ENCODE measurements at regions of chr17 and their contacts with region 1.

Region 1: GRCh38 chr17:13346996-13347765 is 254.5 kb downstream of the HS3ST3A1 start:
- DNase-seq: no peak
- ATAC-seq: no peak
- H3K4me3 ChIP-seq: no peak overlapping the region
- H3K27ac ChIP-seq: no peak overlapping the region
- H3K4me1 ChIP-seq: no peaks in the 10 kb centered on the region
- H3K27me3 ChIP-seq: no peaks in the 10 kb centered on the region
- CTCF ChIP-seq: no peak

Region 2: GRCh38 chr17:13538841-13539411 is 191.7 kb after region 1 on chr17:
- CTCF ChIA-PET with region 1: no interaction called
- POLR2A ChIA-PET with region 1: no interaction called
- in situ Hi-C with region 1: no loop called
- intact Hi-C with region 1: loop called (anchors 10 kb)
- DNase-seq: no peak
- ATAC-seq: no peak
- H3K4me3 ChIP-seq: no peak overlapping the region
- H3K27ac ChIP-seq: no peak overlapping the region
- H3K4me1 ChIP-seq: no peaks in the 10 kb centered on the region
- H3K27me3 ChIP-seq: no peaks in the 10 kb centered on the region
- CTCF ChIP-seq: no peak

Region 3: DNA sequence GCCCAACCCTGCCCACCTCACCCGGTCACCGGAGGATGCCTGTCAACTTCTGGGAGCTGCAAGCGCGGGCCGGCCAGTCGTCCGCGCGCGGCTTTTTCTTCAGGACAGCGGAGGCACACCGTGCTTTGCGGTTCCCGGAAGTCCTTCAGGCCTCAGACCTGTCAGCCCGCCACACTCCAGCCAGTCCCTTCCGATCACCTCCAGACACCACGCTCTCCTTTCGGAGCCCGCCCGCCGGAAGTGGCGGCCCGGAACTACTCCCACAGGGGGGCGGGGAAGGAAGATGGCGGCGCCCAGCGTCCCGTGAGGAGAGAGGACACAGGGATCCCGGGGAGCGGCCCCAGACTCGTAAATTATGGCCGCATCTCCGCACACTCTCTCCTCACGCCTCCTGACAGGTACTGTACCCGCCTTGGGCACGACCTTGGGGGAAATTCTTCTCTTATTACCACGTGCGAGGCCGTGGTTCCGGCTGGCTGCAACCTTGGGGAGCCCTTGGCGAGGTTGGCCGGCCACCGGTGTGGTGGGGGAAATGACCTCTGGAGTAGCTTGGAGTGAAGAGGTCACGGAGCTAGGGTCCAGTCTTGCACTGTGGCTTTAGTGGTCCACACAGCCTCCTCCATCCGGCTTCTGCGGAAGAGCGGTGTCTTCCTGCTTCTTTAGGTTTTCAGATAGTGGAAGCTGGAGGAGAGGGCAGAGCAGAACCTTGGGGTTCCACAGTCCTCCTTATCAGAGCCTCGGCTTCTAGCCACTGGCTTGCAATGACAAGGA is 722.3 kb after region 1 on chr17 and contains the start of gene COX10:
- CTCF ChIA-PET with region 1: no interaction called
- POLR2A ChIA-PET with region 1: no interaction called
- in situ Hi-C with region 1: no loop called
- intact Hi-C with region 1: loop called (anchors 10 kb)
- DNase-seq: peak; percentile 33
- ATAC-seq: peak; percentile 100
- H3K4me3 ChIP-seq: peak within 1 kb of the TSS; percentile 93 to 97
- H3K27ac ChIP-seq: peak within 1 kb of the TSS; percentile 95
- H3K4me1 ChIP-seq: peaks cover 11% of the 10 kb centered on the region; the same call in 1 of the 2 replicates
- H3K27me3 ChIP-seq: no peaks in the 10 kb centered on the region
- CTCF ChIP-seq: no peak
- total RNA-seq, gene COX10: 13.4 TPM

Measured in Panc1 (cell line).